Right lobe of liver (tissue), 6 donors: ENCODE measurements at regions of chr5 and their contacts with region 1.

Region 1: DNA sequence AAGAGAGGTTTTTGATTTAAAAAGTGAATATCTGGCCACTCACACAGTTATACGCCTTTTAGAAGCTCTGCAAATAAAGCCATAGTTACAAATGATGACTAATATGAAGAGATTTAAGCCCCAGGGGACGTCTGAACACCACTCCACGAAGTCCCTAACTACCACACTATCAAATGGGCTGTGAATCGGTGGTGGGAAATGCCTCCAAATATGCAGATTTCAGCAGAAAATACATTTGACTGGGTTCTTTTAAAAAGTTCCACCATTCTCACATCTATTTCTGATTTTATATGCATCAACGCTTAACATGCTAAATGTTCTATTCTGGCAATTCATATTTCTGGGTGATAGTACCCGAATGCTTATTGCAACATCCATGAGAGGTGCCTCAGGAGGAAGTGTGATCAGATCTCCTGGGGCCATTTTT is 22.5 kb downstream of the TICAM2 start:
- DNase-seq: no peak
- ATAC-seq: no peak
- H3K4me3 ChIP-seq: no peak overlapping the region
- H3K27ac ChIP-seq: no peak overlapping the region
- H3K4me1 ChIP-seq: no peaks in the 10 kb centered on the region
- H3K27me3 ChIP-seq: no peaks in the 10 kb centered on the region
- CTCF ChIP-seq: no peak
- POLR2A ChIP-seq: no peak

Region 2: GRCh38 chr5:115309751-115310370 is 269.9 kb before region 1 on chr5:
- intact Hi-C with region 1: loop called (anchors 5 to 10 kb)
- DNase-seq: no peak
- ATAC-seq: peak; percentile 54 to 78 (median 70)
- H3K4me3 ChIP-seq: no peak overlapping the region
- H3K27ac ChIP-seq: no peak overlapping the region
- H3K4me1 ChIP-seq: no peaks in the 10 kb centered on the region
- H3K27me3 ChIP-seq: no peaks in the 10 kb centered on the region
- CTCF ChIP-seq: peak; percentile 72 to 80 (median 72)
- POLR2A ChIP-seq: no peak

Region 3: DNA sequence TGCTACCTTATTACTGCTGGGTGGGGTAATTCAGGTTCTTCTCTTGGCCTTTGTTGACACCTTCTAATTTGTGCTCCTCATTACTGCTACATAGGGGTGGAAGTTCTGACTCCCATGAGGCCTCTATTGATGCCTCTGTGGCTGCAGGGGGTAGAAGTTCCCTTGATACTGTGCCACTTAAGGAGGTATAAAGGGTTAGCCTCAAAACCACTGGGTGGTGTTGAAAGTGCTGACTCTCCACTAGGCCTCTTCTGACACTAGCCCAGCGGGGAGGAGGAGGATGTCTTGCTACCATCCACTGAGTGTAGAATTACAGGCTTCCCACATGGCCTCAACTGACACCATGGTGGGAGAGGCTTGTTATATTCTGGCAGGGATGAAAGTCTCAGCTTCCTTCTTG is 246.6 kb before region 1 on chr5:
- intact Hi-C with region 1: no loop called
- DNase-seq: no peak
- ATAC-seq: no peak
- H3K4me3 ChIP-seq: no peak overlapping the region
- H3K27ac ChIP-seq: no peak overlapping the region
- H3K4me1 ChIP-seq: peaks cover 0 to 14% (median 4%) of the 10 kb centered on the region in 4 donors
- H3K27me3 ChIP-seq: no peaks in the 10 kb centered on the region
- CTCF ChIP-seq: no peak
- POLR2A ChIP-seq: no peak

Region 4: GRCh38 chr5:115666023-115666422 is 86.3 kb after region 1 on chr5:
- intact Hi-C with region 1: no loop called
- DNase-seq: no peak
- ATAC-seq: no peak
- H3K4me3 ChIP-seq: no peak overlapping the region
- H3K27ac ChIP-seq: no peak overlapping the region
- H3K4me1 ChIP-seq: no peaks in the 10 kb centered on the region
- H3K27me3 ChIP-seq: no peaks in the 10 kb centered on the region
- CTCF ChIP-seq: no peak
- POLR2A ChIP-seq: no peak

Region 5: GRCh38 chr5:115948091-115948534 is 368.4 kb after region 1 on chr5:
- intact Hi-C with region 1: no loop called
- DNase-seq: no peak
- ATAC-seq: no peak
- H3K4me3 ChIP-seq: no peak overlapping the region
- H3K27ac ChIP-seq: no peak overlapping the region
- H3K4me1 ChIP-seq: no peaks in the 10 kb centered on the region
- H3K27me3 ChIP-seq: no peaks in the 10 kb centered on the region
- CTCF ChIP-seq: no peak
- POLR2A ChIP-seq: no peak